Right ventricle myocardium inferior (tissue), 1 donor: ENCODE measurements at regions of chrX and their contacts with region 1.

Region 1: DNA sequence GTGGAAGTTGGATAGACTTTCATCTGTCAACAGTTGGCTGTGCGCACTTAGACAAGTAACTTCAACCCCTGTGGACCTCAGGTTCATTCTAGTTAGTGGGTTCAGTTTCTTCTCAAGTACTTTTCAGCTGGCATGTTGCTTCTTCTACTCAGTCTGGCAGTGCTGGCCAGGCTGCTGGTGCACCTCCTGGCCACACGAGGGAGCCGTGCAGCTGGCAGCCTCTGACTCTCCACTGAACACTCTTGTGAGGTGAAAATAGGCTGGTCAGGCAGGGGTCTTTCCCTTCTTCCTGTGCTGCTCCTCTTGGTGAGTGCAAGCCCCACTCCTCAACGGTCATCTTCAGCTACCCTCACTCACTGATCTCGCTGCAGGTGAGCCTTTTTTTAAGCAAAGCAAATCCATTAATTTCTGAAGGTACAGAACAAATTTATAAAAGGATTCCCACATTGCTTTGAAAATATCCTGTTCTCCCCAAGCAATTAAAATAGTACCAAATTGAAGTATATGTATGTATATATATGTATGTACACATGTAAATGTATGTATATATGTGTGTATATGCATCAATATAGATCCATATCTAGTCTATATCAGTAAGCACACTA is 30.6 kb downstream of the LONRF3 start:
- DNase-seq: no peak
- ATAC-seq: peak; percentile 72

Region 2: DNA sequence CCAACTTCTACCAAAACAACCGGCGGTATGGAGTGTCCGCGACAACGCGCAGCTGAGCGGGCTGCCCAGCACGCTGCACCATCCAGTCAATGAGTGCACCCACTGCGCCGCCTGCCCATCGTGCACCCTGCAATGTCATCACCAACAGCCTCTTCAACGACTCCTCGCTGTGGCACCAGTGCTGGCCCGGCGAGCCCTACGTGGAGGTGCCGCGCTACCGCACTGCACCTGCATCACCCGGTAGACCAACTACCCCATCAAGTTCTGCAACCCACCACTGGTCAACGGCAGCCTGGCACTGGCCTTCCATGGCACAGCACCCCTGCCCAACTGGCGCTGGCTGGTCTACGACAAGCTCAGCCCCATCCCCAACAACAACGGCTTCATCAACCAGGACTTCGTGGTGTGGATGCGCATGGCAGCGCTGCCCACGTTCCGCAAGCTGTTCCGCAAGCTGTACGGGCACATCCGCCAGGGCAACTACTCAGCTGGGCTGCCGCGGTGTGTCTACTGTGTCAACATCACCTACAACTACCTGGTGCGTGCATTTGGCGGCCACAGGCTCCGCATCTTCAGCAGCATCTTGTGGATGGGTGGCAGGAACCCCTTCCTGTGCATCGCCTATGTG is 234.8 kb before region 1 on chrX:
- intact Hi-C with region 1: no loop called
- DNase-seq: peak; percentile 46
- ATAC-seq: no peak

Region 3: DNA sequence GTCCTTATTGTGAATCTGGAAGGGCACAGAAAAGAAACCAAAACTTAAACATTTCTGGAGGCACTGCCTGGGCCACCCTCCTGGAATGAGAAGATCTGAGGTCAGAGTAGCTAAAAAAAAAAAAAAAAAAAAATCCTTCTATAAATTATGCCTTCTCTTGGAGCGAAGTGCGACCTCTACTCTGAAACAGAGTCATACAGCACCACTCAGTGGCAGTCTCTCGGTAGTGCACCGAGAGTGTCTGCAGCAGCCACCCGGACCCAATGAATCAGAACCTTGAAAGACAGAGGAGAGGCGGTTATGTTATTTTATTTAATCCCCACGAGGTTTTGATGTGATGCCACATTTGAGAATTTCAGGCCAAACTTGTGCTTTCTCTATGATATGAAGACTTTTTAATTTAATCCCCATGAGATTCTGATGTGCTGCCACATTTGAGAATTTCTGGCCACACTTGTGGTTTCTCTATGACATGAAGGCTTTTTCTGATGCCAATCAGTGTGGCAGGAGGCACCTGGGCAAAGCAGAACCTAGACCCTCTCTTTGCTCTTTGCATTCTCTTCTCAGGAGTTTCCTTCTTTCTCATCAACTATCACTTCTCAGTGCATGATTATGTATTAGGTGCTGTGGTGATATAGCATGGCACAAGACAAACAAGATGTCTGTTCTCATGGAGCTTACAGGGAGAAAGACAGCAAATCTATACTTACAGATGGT is 62.2 kb after region 1 on chrX:
- intact Hi-C with region 1: loop called (anchors 2 kb)
- DNase-seq: no peak
- ATAC-seq: peak; percentile 72